Psoas muscle (tissue), 8 donors: ENCODE measurements at regions of chrX and their contacts with region 1.

Region 1: DNA sequence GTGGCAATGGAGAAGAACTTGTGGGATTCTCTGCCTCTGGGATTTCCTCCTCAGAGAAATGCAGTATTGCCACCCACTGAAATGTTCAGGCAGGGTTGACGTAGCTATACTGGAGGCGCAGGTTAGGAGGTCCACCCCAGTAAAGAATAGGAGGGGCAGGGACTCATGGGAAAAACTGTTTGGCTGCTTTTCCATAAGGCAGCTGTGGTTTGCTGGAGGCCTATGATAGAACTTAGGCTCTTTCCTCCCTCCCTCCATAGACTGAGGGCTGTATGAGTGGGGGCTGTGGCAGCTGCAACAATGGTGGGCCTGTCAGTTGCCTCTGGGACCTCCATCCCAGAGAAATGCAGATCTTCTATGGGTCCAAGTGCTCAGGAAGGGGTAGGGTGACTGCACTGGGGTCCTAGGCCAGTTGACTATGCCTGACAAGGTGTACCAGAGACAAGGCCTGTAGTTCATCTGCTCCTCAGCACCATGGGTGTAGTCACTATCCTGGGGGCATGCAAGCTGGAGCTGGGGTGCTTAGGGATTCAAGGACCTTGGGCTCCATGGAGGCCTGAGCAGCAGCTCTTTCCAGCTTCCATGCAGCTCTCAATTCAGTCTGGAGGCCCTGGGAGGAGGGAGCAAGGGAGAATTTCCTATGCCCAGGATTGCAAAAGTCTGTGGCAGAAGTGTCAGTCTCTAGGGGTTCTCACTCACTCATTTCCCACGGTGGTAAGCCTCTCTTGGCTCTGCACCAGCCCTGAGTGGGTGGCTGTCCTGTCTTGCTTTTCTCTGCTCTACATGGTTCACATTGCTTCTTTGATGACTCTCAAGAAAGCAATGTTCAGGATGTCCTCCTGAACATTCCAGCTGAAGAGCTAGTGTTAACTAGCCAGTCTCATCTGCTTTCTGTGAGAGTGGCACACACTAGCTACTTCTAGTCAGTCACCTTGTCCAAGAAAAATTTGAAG is 353.0 kb downstream of the IDS start:
- DNase-seq: no peak
- ATAC-seq: peak in 1 of 4 donors; percentile 33
- H3K4me3 ChIP-seq: no peak overlapping the region
- H3K27ac ChIP-seq: no peak overlapping the region
- H3K4me1 ChIP-seq: no peaks in the 10 kb centered on the region
- H3K27me3 ChIP-seq: no peaks in the 10 kb centered on the region
- CTCF ChIP-seq: no peak

Region 2: GRCh38 chrX:148914783-148915182 is 237.3 kb before region 1 on chrX:
- intact Hi-C with region 1: no loop called
- DNase-seq: no peak
- ATAC-seq: no peak
- H3K4me3 ChIP-seq: no peak overlapping the region
- H3K27ac ChIP-seq: no peak overlapping the region
- H3K4me1 ChIP-seq: no peaks in the 10 kb centered on the region
- H3K27me3 ChIP-seq: no peaks in the 10 kb centered on the region
- CTCF ChIP-seq: no peak

Region 3: DNA sequence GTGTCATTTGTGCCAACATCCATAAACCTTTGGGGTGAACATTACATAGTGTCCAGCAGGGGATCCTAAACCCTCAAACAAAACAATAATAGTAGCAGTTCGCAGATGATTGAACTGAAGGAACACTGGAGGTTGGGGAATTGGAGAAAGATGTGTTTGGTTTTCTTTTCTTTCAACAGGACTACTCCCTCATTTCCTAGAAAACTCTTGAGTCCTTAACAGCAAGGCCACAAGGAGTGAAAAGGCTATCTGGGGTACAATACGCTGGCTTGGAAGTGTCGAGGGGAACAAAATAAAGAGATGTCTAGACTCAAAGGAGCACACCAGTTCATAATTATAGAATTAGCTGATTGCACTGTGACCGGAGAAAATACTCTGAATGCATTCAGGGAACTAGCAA is 281.0 kb after region 1 on chrX:
- intact Hi-C with region 1: loop called in 1 of 2 experiments (anchors 5 kb)
- DNase-seq: no peak
- ATAC-seq: no peak
- H3K4me3 ChIP-seq: no peak overlapping the region
- H3K27ac ChIP-seq: no peak overlapping the region
- H3K4me1 ChIP-seq: no peaks in the 10 kb centered on the region
- H3K27me3 ChIP-seq: no peaks in the 10 kb centered on the region
- CTCF ChIP-seq: no peak

Region 4: DNA sequence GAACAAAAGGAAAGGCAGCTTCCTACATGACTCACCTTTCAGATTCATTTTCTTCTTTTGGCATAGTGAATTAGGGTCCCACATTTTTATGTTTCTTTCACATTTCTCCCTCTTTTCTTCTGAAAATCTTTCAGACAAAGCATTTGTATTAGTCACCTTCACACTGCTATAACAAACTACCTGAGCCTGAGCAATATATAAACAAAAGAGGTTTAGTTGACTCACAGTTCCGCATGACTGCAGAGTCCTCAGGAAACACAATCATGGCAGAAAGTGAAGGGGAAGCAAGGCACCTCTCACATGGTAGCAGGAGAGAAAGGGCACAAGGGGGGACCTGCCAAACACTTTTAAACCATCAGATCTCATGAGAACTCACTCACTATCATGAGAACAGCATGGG is 666.6 kb after region 1 on chrX:
- intact Hi-C with region 1: no loop called
- DNase-seq: no peak
- ATAC-seq: no peak
- H3K4me3 ChIP-seq: no peak overlapping the region
- H3K27ac ChIP-seq: no peak overlapping the region
- H3K4me1 ChIP-seq: no peaks in the 10 kb centered on the region
- H3K27me3 ChIP-seq: peaks cover 0 to 3% (median 0%) of the 10 kb centered on the region in 3 donors
- CTCF ChIP-seq: no peak